GM13977 (cell line): ENCODE measurements at regions of chr11 and their contacts with region 1.

Region 1: GRCh38 chr11:110429731-110430266 is at the start of gene FDX1:
- DNase-seq: peak; percentile 87
- CTCF ChIP-seq: peak; percentile 79

Region 2: GRCh38 chr11:110587972-110588371 is 158.2 kb after region 1 on chr11:
- in situ Hi-C with region 1: no loop called
- DNase-seq: no peak
- CTCF ChIP-seq: no peak

Region 3: DNA sequence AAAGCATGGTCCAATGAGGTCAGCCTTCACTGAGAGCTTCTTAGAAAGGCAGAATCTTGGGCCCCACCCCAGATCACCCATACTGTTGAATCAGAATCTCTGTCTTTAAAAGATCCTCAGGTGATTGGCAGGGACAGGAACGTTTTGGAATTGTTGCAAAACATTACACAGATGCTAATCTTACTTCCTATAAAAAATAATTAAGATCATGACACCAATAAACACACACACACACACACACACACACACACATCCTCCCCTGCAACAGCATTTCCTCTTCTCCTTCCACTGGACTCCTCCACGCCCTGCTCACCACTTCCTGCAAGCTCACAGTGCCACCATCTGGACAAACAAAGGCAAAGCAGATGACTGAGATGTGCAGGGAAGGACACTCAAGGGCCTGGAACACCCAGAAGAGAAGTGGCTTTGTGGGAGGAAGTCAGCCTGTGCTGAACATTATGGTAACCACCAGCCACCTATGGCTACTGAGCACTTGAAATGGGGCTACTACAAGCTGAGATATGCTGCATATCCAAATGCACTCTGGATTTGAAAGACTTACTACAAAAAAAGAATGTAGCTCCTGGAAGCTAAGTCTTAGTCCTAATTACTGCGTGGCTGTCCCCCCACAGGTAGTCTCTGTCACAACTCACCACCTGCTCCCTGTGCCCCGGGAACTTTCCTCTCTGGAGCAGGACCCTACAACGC is 1016.8 kb after region 1 on chr11:
- in situ Hi-C with region 1: loop called (anchors 25 kb)
- DNase-seq: peak; percentile 90
- CTCF ChIP-seq: peak; percentile 94